Right ventricle myocardium superior (tissue), 1 donor: ENCODE measurements at regions of chr7 and their contacts with region 1.

Region 1: GRCh38 chr7:55641273-55641691 is 69.0 kb upstream of the VOPP1 start:
- DNase-seq: no peak
- ATAC-seq: peak; percentile 93

Region 2: GRCh38 chr7:55534175-55534915 is 106.9 kb before region 1 on chr7:
- intact Hi-C with region 1: no loop called
- DNase-seq: peak; percentile 57
- ATAC-seq: peak; percentile 74

Region 3: DNA sequence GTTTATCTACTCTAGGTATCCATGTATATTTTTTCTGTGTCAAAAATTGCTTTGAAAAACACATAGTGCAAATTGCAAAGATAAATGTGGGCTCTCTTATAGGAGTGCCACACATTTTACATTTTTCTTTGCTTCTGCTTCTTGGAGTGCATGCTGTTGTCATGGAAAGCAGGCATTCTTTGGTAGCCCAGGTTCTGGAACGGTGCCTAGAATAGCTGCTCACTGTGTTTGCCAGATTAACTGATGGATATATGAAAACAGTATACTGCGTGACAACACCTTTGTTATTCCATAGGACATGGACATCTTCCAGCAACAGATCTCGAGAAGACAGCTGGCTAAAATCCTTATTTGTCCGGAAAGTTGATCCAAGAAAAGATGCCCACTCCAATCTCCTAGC is 336.5 kb after region 1 on chr7:
- intact Hi-C with region 1: loop called (anchors 10 kb)
- DNase-seq: no peak
- ATAC-seq: no peak